ENCODE measurements at regions of chr3 and their contacts with region 1.

Region 1: DNA sequence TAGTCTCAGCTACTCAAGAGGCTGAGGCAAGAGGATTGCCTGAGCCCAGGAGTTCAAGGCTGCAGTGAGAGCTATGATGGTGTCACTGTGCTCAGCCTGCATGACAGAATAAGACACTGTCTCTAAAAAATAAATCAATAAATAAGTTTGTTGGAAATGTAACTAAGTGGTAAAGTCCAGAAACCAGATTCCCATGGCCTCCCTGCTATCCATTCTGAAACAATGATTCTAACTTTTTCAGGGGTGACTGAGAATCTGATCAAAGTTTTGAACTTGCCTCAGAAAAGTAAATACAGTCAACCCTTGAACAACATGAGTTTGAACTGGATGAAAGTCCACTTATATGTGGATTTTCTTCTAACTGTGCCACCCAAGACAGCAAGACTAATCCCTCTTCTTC is 86.2 kb downstream of the NBEAL2 start:
- DNase-seq: no peak
- ATAC-seq: no peak
- H3K4me3 ChIP-seq: no peak overlapping the region
- H3K27ac ChIP-seq: no peak overlapping the region
- H3K4me1 ChIP-seq: no peaks in the 10 kb centered on the region
- H3K27me3 ChIP-seq: no peaks in the 10 kb centered on the region
- CTCF ChIP-seq: no peak

Region 2: GRCh38 chr3:48178072-48178471 is 1112.4 kb after region 1 on chr3:
- intact Hi-C with region 1: loop called in 1 of 10 experiments (anchors 10 kb)
- DNase-seq: no peak
- ATAC-seq: peak in 7 of 8 donors; percentile 48 to 89 (median 81)
- H3K4me3 ChIP-seq: no peak overlapping the region
- H3K27ac ChIP-seq: no peak overlapping the region
- H3K4me1 ChIP-seq: peaks cover 0 to 18% (median 0%) of the 10 kb centered on the region in 9 donors
- H3K27me3 ChIP-seq: no peaks in the 10 kb centered on the region
- CTCF ChIP-seq: no peak